Activated naive CD4-positive, alpha-beta T cell treated with anti-CD3 and anti-CD28 coated beads for 36 hours (primary cell): ENCODE measurements at regions of chr3 and their contacts with region 1.

Region 1: DNA sequence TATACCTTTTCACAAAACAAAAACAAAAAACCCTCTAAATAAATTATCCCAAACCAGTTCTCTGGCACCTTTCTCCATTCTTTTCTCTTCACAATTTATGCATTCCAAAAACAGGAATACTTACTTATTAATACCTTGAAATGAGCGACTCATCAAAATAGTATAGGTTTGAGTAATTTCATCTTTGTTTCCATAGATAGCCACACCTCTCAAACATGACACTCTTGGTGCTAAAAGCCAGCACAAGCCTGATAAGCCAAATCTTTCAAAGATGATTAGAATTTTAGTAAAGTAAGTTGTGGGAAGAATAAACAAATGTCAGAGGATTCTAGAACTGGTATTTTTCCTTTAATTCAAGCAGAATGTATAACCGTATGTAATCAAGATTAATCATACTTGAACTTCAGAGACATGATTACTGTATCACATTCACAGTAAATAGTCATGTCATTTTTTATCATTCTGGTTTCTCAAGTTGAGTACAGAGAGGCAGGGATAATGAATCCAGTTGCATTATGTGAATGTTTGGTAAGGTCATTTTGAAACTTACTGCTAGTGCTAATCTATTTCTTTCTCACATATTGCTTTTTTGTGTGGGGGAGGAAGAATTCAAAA is 12.1 kb upstream of the WDR5B start:
- DNase-seq: no peak
- H3K4me3 Mint-ChIP-seq: no peak overlapping the region
- H3K27ac Mint-ChIP-seq: peak overlapping the region; percentile 63
- H3K4me1 Mint-ChIP-seq: peaks cover 20% of the 10 kb centered on the region
- H3K27me3 Mint-ChIP-seq: no peaks in the 10 kb centered on the region

Region 2: DNA sequence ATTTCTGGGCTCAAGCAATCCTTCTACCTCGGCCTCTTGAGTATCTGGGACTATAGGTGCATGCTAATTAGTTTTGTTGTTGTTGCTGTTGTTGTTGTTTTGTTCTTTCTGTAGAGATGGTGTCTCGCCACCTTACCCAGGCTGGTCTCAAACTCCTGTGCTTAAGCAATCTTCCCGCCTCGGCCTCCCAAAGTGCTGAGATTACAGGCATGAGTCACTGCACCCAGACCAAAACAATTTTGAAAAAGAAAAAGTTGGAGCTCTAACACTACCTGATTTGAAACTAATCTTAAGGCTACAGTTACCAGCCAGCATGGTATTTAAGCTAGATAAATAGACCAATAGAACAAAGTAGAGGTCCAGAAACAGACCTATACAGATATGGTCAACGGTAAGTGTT is 57.0 kb after region 1 on chr3:
- CTCF ChIA-PET with region 1: no interaction called
- intact Hi-C with region 1: loop called (anchors 1 kb)
- DNase-seq: no peak
- H3K4me3 Mint-ChIP-seq: no peak overlapping the region
- H3K27ac Mint-ChIP-seq: no peak overlapping the region
- H3K4me1 Mint-ChIP-seq: peaks cover 66% of the 10 kb centered on the region
- H3K27me3 Mint-ChIP-seq: no peaks in the 10 kb centered on the region